ENCODE measurements at regions of chr1 and their contacts with region 1.

Region 1: GRCh38 chr1:210292231-210292871 is 36.4 kb upstream of the HHAT start:
- DNase-seq: peak; percentile 43 to 88
- H3K4me3 ChIP-seq: peak overlapping the region; percentile 53
- H3K27ac ChIP-seq: no peak overlapping the region
- H3K4me1 ChIP-seq: peaks cover 10% of the 10 kb centered on the region
- H3K27me3 ChIP-seq: no peaks in the 10 kb centered on the region
- CTCF ChIP-seq: no peak; the same call in 1 of the 2 replicates

Region 2: DNA sequence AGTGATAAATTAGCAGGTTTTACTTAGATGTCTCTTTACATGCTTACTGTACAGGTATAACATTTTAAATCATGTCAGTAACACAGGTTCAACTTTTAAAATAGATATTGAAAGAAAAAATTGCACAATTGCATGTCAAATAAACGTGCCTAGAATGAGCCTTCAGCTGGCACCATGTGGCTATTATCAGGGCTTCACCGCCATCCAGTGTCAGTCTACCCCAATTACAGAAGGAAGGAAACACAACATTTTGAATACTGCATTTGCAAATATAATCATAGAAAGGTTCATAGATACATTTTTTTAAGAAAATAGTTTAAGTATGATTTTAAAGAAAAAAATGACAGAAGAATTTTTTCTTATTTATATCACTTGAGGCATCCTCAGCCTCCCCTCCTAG is 107.3 kb before region 1 on chr1:
- CTCF ChIA-PET with region 1: no interaction called
- POLR2A ChIA-PET with region 1: interaction called, 5 read pairs
- intact Hi-C with region 1: loop called (anchors 5 kb)
- DNase-seq: no peak
- H3K4me3 ChIP-seq: no peak overlapping the region
- H3K27ac ChIP-seq: no peak overlapping the region
- H3K4me1 ChIP-seq: peaks cover 19% of the 10 kb centered on the region
- H3K27me3 ChIP-seq: no peaks in the 10 kb centered on the region
- CTCF ChIP-seq: no peak

Region 3: GRCh38 chr1:210233216-210234020 is 58.9 kb before region 1 on chr1:
- CTCF ChIA-PET with region 1: interaction called, 4 read pairs
- POLR2A ChIA-PET with region 1: interaction called, 10 read pairs
- intact Hi-C with region 1: loop called (anchors 1 kb)
- DNase-seq: peak; percentile 75 to 77
- H3K4me3 ChIP-seq: peak overlapping the region; percentile 96
- H3K27ac ChIP-seq: peak overlapping the region; percentile 41
- H3K4me1 ChIP-seq: peaks cover 31% of the 10 kb centered on the region
- H3K27me3 ChIP-seq: no peaks in the 10 kb centered on the region
- CTCF ChIP-seq: no peak

Region 4: DNA sequence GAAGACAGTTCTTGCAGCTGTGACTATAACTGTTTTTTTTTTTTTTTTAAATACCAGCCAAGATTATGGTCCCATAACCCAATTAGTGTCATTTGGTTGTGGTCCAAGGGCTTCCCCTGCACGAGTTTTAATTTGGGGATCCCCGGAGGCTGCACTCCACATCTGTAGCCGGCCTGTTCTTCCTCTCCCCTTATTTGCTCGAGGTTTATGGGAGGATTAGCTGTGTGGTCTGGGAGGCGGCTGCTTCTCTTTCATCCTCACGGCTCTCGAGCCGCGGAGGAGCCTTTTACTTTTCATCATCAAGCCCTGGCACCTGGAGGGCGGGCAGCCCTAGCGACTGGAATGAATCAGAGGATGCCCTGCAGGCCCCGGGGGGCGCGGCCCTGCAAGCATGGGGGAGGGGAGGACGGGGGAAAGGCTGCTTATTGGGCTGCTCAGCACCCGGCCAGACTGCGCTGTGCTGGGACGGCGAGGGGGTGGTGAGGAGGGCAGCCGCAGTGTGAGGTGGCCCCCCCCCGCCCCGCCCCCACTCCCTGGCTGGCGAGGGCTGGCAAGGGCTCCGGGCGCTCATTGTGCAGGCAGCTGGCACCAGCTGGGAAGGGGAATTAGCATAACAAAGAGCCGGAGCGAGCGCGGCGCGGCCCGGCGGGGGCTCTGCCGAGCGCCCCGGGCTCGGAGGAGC is 41.2 kb before region 1 on chr1:
- CTCF ChIA-PET with region 1: no interaction called
- POLR2A ChIA-PET with region 1: interaction called, 5 read pairs
- intact Hi-C with region 1: loop called (anchors 1 kb)
- DNase-seq: peak; percentile 81 to 95
- H3K4me3 ChIP-seq: peak overlapping the region; percentile 61
- H3K27ac ChIP-seq: no peak overlapping the region
- H3K4me1 ChIP-seq: peaks cover 30% of the 10 kb centered on the region
- H3K27me3 ChIP-seq: no peaks in the 10 kb centered on the region
- CTCF ChIP-seq: no peak

Region 5: GRCh38 chr1:210262167-210262896 is 30.0 kb before region 1 on chr1:
- CTCF ChIA-PET with region 1: interaction called, 12 read pairs
- POLR2A ChIA-PET with region 1: interaction called, 5 read pairs
- intact Hi-C with region 1: no loop called
- DNase-seq: no peak
- H3K4me3 ChIP-seq: no peak overlapping the region
- H3K27ac ChIP-seq: no peak overlapping the region
- H3K4me1 ChIP-seq: peaks cover 16% of the 10 kb centered on the region; the same call in 1 of the 2 replicates
- H3K27me3 ChIP-seq: no peaks in the 10 kb centered on the region
- CTCF ChIP-seq: no peak

Region 6: GRCh38 chr1:210272666-210273065 is 19.7 kb before region 1 on chr1:
- CTCF ChIA-PET with region 1: interaction called, 4 read pairs
- POLR2A ChIA-PET with region 1: no interaction called
- intact Hi-C with region 1: loop called (anchors 2 kb)
- DNase-seq: peak in 1 of 2 experiments; percentile 63
- H3K4me3 ChIP-seq: no peak overlapping the region
- H3K27ac ChIP-seq: no peak overlapping the region
- H3K4me1 ChIP-seq: no peaks in the 10 kb centered on the region
- H3K27me3 ChIP-seq: no peaks in the 10 kb centered on the region
- CTCF ChIP-seq: no peak

Region 7: GRCh38 chr1:210328746-210329503 is 36.6 kb after region 1 on chr1 and contains the start of gene HHAT:
- CTCF ChIA-PET with region 1: no interaction called
- POLR2A ChIA-PET with region 1: no interaction called
- intact Hi-C with region 1: loop called (anchors 2 kb)
- DNase-seq: peak; percentile 50 to 86
- H3K4me3 ChIP-seq: peak within 1 kb of the TSS; percentile 95
- H3K27ac ChIP-seq: peak within 1 kb of the TSS; percentile 53
- H3K4me1 ChIP-seq: peaks cover 18% of the 10 kb centered on the region; the same call in 1 of the 2 replicates
- H3K27me3 ChIP-seq: no peaks in the 10 kb centered on the region
- CTCF ChIP-seq: no peak
- total RNA-seq, gene HHAT: 5.3 and 10.9 TPM in 2 replicates